Naive thymus-derived CD4-positive, alpha-beta T cell (primary cell): ENCODE measurements at regions of chr7 and their contacts with region 1.

Region 1: GRCh38 chr7:26667500-26668133 is 196.8 kb downstream of the SKAP2 start:
- DNase-seq: peak in 8 of 9 donors; percentile 39 to 78 (median 64)
- ATAC-seq: peak; percentile 77
- H3K4me3 ChIP-seq: no peak overlapping the region
- H3K4me3 Mint-ChIP-seq: no peak overlapping the region
- H3K27ac ChIP-seq: no peak overlapping the region
- H3K27ac Mint-ChIP-seq: no peak overlapping the region
- H3K4me1 ChIP-seq: peaks cover 0 to 4% of the 10 kb centered on the region in 2 donors
- H3K4me1 Mint-ChIP-seq: peaks cover 0 to 23% (median 17%) of the 10 kb centered on the region in 7 donors
- H3K27me3 ChIP-seq: no peaks in the 10 kb centered on the region
- H3K27me3 Mint-ChIP-seq: peaks cover 9 to 61% (median 14%) of the 10 kb centered on the region in 5 donors

Region 2: GRCh38 chr7:26061688-26062150 is 605.9 kb before region 1 on chr7:
- CTCF ChIA-PET with region 1: interaction called, 3 read pairs
- POLR2A ChIA-PET with region 1: no interaction called
- intact Hi-C with region 1: loop called in 1 of 2 experiments (anchors 5 kb)
- DNase-seq: peak; percentile 37 to 71 (median 59)
- ATAC-seq: peak; percentile 88
- H3K4me3 ChIP-seq: no peak overlapping the region
- H3K4me3 Mint-ChIP-seq: no peak overlapping the region
- H3K27ac ChIP-seq: no peak overlapping the region
- H3K27ac Mint-ChIP-seq: no peak overlapping the region
- H3K4me1 ChIP-seq: no peaks in the 10 kb centered on the region
- H3K4me1 Mint-ChIP-seq: peaks cover 0 to 13% (median 0%) of the 10 kb centered on the region in 7 donors
- H3K27me3 ChIP-seq: no peaks in the 10 kb centered on the region
- H3K27me3 Mint-ChIP-seq: peaks cover 5 to 33% (median 15%) of the 10 kb centered on the region in 5 donors

Region 3: GRCh38 chr7:26090927-26091519 is 576.6 kb before region 1 on chr7:
- CTCF ChIA-PET with region 1: no interaction called
- POLR2A ChIA-PET with region 1: no interaction called
- intact Hi-C with region 1: loop called (anchors 5 kb)
- DNase-seq: peak in 7 of 9 donors; percentile 19 to 63 (median 53)
- ATAC-seq: peak; percentile 64
- H3K4me3 ChIP-seq: no peak overlapping the region
- H3K4me3 Mint-ChIP-seq: peak overlapping the region in 9 of 10 donors; percentile 4 to 50 (median 30)
- H3K27ac ChIP-seq: no peak overlapping the region
- H3K27ac Mint-ChIP-seq: peak overlapping the region in 6 of 9 donors; percentile 1 to 68 (median 2)
- H3K4me1 ChIP-seq: peaks cover 0 to 20% of the 10 kb centered on the region in 2 donors
- H3K4me1 Mint-ChIP-seq: peaks cover 11 to 54% (median 22%) of the 10 kb centered on the region in 7 donors
- H3K27me3 ChIP-seq: no peaks in the 10 kb centered on the region
- H3K27me3 Mint-ChIP-seq: no peaks in the 10 kb centered on the region

Region 4: GRCh38 chr7:26376175-26376917 is 291.3 kb before region 1 on chr7:
- CTCF ChIA-PET with region 1: interaction called, 17 read pairs
- POLR2A ChIA-PET with region 1: interaction called, 3 read pairs
- intact Hi-C with region 1: loop called (anchors 1 kb)
- DNase-seq: peak in 7 of 9 donors; percentile 13 to 56 (median 20)
- ATAC-seq: peak; percentile 51
- H3K4me3 ChIP-seq: peak overlapping the region; percentile 54
- H3K4me3 Mint-ChIP-seq: peak overlapping the region; percentile 83 to 95 (median 85)
- H3K27ac ChIP-seq: no peak overlapping the region
- H3K27ac Mint-ChIP-seq: peak overlapping the region in 1 of 9 donors; percentile 65
- H3K4me1 ChIP-seq: peaks cover 4 to 6% of the 10 kb centered on the region in 2 donors
- H3K4me1 Mint-ChIP-seq: peaks cover 0 to 8% (median 4%) of the 10 kb centered on the region in 7 donors
- H3K27me3 ChIP-seq: peaks cover 4 to 24% of the 10 kb centered on the region in 2 donors
- H3K27me3 Mint-ChIP-seq: peaks cover 28 to 62% (median 37%) of the 10 kb centered on the region in 5 donors

Region 5: DNA sequence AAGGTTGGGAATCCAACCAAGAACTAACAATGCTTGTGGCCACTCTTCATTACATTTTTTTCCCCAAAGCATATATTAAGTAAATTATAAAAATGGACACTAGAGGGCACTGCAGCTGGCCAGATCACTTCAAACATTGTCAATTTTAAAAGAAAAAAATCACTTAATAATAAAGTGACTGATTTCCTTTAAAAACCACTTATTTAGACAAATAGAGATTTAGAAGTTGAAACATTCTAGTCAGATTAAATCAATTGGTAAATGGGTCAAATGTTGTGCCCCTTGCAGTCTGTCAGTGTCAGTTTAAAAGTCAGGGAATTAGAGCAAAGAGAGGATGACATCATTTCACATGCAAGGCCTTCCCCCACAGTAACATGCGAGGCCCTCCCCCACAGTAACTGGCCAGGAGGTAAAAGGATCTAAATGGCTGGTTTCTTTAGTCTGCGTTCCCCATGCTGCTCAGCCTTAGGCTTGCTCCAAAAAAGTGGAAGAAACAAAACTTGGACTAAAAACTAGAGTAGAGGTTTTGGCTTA is 18.9 kb after region 1 on chr7:
- CTCF ChIA-PET with region 1: interaction called, 20 read pairs
- POLR2A ChIA-PET with region 1: no interaction called
- intact Hi-C with region 1: no loop called
- DNase-seq: peak in 7 of 9 donors; percentile 7 to 49 (median 30)
- ATAC-seq: peak; percentile 54
- H3K4me3 ChIP-seq: no peak overlapping the region
- H3K4me3 Mint-ChIP-seq: no peak overlapping the region
- H3K27ac ChIP-seq: no peak overlapping the region
- H3K27ac Mint-ChIP-seq: no peak overlapping the region
- H3K4me1 ChIP-seq: no peaks in the 10 kb centered on the region
- H3K4me1 Mint-ChIP-seq: peaks cover 0 to 1% (median 0%) of the 10 kb centered on the region in 7 donors
- H3K27me3 ChIP-seq: peaks cover 0 to 11% of the 10 kb centered on the region in 2 donors
- H3K27me3 Mint-ChIP-seq: peaks cover 38 to 67% (median 45%) of the 10 kb centered on the region in 5 donors